Endothelial cell of umbilical vein (primary cell): ENCODE measurements at regions of chr13 and their contacts with region 1.

Region 1: GRCh38 chr13:23375001-23375971 is 58.2 kb downstream of the SACS start:
- DNase-seq: peak; percentile 97
- H3K4me3 ChIP-seq: peak overlapping the region; percentile 74 to 99 (median 94)
- H3K27ac ChIP-seq: peak overlapping the region; percentile 68
- H3K4me1 ChIP-seq: peaks cover 68% of the 10 kb centered on the region
- H3K27me3 ChIP-seq: no peaks in the 10 kb centered on the region
- CTCF ChIP-seq: peak; percentile 7 to 10
- POLR2A ChIP-seq: peak; percentile 72

Region 2: GRCh38 chr13:23185542-23185941 is 189.7 kb before region 1 on chr13:
- CTCF ChIA-PET with region 1: no interaction called
- POLR2A ChIA-PET with region 1: no interaction called
- dilution Hi-C with region 1: no loop called
- intact Hi-C with region 1: no loop called
- DNase-seq: no peak
- H3K4me3 ChIP-seq: no peak overlapping the region
- H3K27ac ChIP-seq: no peak overlapping the region
- H3K4me1 ChIP-seq: no peaks in the 10 kb centered on the region
- H3K27me3 ChIP-seq: no peaks in the 10 kb centered on the region
- CTCF ChIP-seq: no peak
- POLR2A ChIP-seq: no peak

Region 3: DNA sequence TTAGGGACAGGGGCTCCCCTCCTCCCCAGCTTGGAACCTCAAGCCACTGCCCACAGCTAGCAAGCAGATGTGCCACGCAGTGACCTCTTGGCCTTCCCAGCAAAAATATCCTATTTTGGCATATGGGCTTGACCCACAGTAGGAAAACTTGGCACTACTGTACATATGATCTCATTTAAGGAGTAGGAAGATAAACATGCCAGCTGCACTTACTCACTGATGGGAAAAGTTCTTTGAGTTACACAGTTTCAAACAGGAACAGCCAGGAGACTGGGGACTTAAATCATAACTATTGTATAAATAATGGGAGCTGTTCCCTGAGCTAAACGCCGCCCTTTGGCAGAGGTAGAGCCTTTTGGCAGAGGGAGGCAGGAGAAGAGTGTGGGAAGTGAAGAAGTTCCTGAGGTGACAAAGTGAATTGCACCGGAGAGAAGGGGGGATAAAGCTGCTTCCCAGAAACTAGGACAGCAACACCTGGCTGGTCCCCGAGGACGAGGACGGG is 52.1 kb after region 1 on chr13:
- CTCF ChIA-PET with region 1: interaction called, 4 read pairs
- POLR2A ChIA-PET with region 1: no interaction called
- dilution Hi-C with region 1: no loop called
- intact Hi-C with region 1: loop called (anchors 1 kb)
- DNase-seq: peak; percentile 96
- H3K4me3 ChIP-seq: peak overlapping the region in 1 of 3 experiments; percentile 3
- H3K27ac ChIP-seq: peak overlapping the region; percentile 96
- H3K4me1 ChIP-seq: peaks cover 27% of the 10 kb centered on the region
- H3K27me3 ChIP-seq: no peaks in the 10 kb centered on the region
- CTCF ChIP-seq: no peak
- POLR2A ChIP-seq: no peak

Region 4: GRCh38 chr13:23551213-23552008 is 176.1 kb after region 1 on chr13:
- CTCF ChIA-PET with region 1: no interaction called
- POLR2A ChIA-PET with region 1: no interaction called
- dilution Hi-C with region 1: no loop called
- intact Hi-C with region 1: no loop called
- DNase-seq: no peak
- H3K4me3 ChIP-seq: no peak overlapping the region
- H3K27ac ChIP-seq: no peak overlapping the region
- H3K4me1 ChIP-seq: no peaks in the 10 kb centered on the region
- H3K27me3 ChIP-seq: peaks cover 18 to 25% of the 10 kb centered on the region in 2 experiments
- CTCF ChIP-seq: no peak
- POLR2A ChIP-seq: no peak

Region 5: GRCh38 chr13:23579072-23579895 is 204.0 kb after region 1 on chr13:
- CTCF ChIA-PET with region 1: no interaction called
- POLR2A ChIA-PET with region 1: no interaction called
- dilution Hi-C with region 1: no loop called
- intact Hi-C with region 1: loop called (anchors 5 kb)
- DNase-seq: peak; percentile 81
- H3K4me3 ChIP-seq: peak overlapping the region; percentile 16 to 64 (median 53)
- H3K27ac ChIP-seq: no peak overlapping the region
- H3K4me1 ChIP-seq: peaks cover 13% of the 10 kb centered on the region
- H3K27me3 ChIP-seq: peaks cover 27 to 41% of the 10 kb centered on the region in 2 experiments
- CTCF ChIP-seq: no peak
- POLR2A ChIP-seq: no peak

Region 6: DNA sequence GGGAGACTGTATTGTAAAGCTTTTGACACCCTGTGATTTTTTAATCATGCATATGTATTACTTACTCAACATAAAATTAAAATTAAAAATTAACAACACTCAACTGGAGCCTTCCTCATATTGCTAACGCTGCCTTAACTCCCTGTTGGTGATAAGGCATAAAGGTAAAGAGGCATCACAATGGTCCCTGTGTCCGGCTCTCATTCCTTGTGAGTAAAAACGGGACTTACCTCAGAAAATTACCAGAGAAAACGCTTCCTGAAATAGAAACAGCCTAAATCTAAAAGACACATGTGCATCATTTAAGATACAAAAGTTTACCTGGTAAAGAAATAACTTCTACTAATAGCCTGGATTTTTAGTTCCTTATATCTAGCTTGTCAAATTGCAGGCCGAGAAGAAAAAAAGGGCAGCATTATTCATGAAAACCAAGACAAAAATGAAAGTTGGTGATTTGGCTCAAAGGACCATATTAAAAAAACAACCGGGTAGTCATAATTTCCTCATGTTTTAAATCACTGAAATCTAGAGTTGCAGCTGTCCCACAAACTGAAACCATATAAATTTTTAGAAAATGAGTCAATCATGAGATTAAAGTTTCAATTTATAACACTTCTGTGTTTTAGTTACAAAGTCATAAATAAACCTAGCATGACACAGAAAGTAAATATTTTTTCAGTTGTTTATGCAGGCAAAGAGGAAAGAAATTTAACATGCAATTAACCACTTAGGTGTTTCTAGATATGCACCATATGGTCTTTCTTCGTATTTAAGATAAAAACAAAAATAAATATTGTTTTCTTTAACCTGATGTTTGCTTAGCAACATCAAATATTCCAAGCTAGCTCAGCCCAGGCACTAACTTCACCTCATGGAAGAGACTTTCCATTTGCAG is 419.2 kb after region 1 on chr13:
- CTCF ChIA-PET with region 1: no interaction called
- POLR2A ChIA-PET with region 1: no interaction called
- dilution Hi-C with region 1: no loop called
- intact Hi-C with region 1: loop called (anchors 5 kb)
- DNase-seq: peak; percentile 91
- H3K4me3 ChIP-seq: peak overlapping the region in 1 of 3 experiments; percentile 47
- H3K27ac ChIP-seq: peak overlapping the region; percentile 85
- H3K4me1 ChIP-seq: peaks cover 22% of the 10 kb centered on the region
- H3K27me3 ChIP-seq: no peaks in the 10 kb centered on the region
- CTCF ChIP-seq: no peak
- POLR2A ChIP-seq: peak; percentile 28

Region 7: DNA sequence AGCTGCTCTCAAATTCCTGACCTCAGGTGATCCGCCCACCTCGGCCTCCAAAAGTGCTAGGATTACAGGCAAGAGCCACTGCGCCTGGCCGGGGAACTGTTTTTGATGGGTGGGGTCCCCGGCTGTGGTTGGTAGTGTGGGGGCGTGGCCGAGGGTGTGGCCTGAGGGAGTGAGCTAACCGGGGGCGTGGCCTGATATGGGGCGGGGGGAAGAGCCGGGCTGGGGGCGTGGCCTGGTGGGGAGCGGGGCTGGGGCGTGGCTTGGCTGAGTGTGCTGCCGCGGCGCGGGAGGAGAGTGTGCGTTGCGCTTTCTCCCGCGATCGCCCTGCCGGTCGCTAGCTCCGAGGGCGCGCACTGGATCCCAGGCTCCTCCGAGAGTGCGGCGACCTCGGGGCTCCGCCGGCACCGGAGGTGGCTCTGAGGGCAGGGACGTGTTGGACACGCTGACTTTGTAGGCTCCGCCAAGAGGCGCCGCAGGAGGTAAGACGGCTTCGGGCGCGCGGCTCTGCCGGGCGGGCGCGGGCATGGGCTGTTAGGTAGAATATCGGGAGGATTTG is 785.2 kb after region 1 on chr13 and contains the start of gene SPATA13:
- CTCF ChIA-PET with region 1: no interaction called
- POLR2A ChIA-PET with region 1: no interaction called
- dilution Hi-C with region 1: no loop called
- intact Hi-C with region 1: loop called (anchors 2 kb)
- DNase-seq: peak; percentile 90
- H3K4me3 ChIP-seq: peak within 1 kb of the TSS; percentile 64 to 77 (median 73)
- H3K27ac ChIP-seq: peak within 1 kb of the TSS; percentile 61
- H3K4me1 ChIP-seq: peaks cover 17% of the 10 kb centered on the region
- H3K27me3 ChIP-seq: no peaks in the 10 kb centered on the region
- CTCF ChIP-seq: no peak
- POLR2A ChIP-seq: peak; percentile 75
- total RNA-seq, gene SPATA13: 12.9 and 13.3 TPM in 2 replicates